Psoas muscle (tissue), 8 donors: ENCODE measurements at regions of chr9 and their contacts with region 1.

Region 1: DNA sequence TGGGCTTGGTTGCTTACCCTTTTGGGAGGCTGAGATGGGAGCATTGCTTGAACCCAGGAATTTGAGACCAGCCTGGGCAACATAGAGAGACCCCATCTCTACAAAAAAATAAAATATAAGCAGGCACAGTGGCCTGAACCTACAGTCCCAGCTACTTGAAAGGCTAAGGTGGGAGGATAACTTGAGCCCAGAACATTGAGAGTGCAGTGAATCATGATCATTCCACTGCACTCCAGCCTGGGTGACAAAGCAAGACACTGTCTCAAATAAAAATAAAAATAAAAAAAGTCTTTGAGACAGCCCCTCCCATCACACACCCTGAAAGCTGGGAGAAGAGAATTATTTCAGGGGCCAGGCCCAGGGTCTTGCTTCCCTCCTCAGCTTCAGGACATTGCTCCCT is 251.8 kb downstream of the BRINP1 start:
- DNase-seq: no peak
- ATAC-seq: no peak
- H3K4me3 ChIP-seq: no peak overlapping the region
- H3K27ac ChIP-seq: no peak overlapping the region
- H3K4me1 ChIP-seq: no peaks in the 10 kb centered on the region
- H3K27me3 ChIP-seq: no peaks in the 10 kb centered on the region
- CTCF ChIP-seq: no peak

Region 2: GRCh38 chr9:119179701-119180100 is 62.3 kb after region 1 on chr9:
- intact Hi-C with region 1: loop called in 1 of 2 experiments (anchors 2 kb)
- DNase-seq: no peak
- ATAC-seq: no peak
- H3K4me3 ChIP-seq: no peak overlapping the region
- H3K27ac ChIP-seq: no peak overlapping the region
- H3K4me1 ChIP-seq: no peaks in the 10 kb centered on the region
- H3K27me3 ChIP-seq: no peaks in the 10 kb centered on the region
- CTCF ChIP-seq: no peak